Heart right ventricle (tissue), 16 donors: ENCODE measurements at regions of chr7 and their contacts with region 1.

Region 1: GRCh38 chr7:30062591-30062990 is 34.4 kb downstream of the PLEKHA8 start:
- DNase-seq: no peak
- ATAC-seq: peak in 5 of 8 donors; percentile 63 to 78 (median 73)
- H3K4me3 ChIP-seq: no peak overlapping the region
- H3K27ac ChIP-seq: no peak overlapping the region
- H3K4me1 ChIP-seq: peaks cover 0 to 1% (median 0%) of the 10 kb centered on the region in 9 donors
- H3K27me3 ChIP-seq: no peaks in the 10 kb centered on the region
- CTCF ChIP-seq: peak; percentile 28 to 70 (median 63)

Region 2: DNA sequence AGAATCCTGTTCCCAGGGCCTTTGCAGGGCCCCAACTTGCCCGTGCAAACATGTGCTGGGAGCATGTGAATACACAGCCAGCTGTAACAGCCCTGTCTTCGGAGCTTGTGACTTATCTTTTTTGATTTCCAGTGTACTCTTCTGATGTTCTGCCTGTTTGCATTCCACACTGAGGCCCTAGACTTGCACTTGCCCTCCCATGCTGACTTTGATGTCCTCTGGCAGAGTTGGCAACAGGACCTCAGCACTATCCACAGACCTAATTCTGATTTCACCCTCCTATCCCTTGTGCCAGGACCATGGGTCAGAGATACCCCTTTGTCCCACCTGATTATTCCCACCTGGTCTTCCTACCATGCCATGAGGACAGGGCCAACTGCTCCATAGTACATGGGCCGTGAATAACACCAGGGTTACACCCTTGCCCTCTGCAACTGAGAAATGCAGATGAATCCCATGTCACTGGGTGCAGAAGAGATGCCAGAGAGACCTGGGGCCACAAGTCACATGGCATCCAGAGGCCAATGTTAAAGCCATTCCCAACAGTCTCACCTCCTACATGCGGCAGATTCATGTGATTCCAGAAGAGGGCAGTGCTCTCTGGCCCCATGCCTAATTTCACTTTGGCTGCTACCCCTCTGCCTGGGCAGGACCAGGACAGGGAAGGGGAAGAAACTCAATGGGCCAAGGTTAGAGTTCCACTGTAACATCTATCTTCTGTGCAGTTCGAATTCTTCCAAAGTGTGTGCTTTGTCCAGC is 116.0 kb before region 1 on chr7:
- intact Hi-C with region 1: loop called in 4 of 10 experiments (anchors 10 kb)
- DNase-seq: peak in 1 of 2 donors; percentile 35
- ATAC-seq: peak; percentile 47 to 78 (median 66)
- H3K4me3 ChIP-seq: no peak overlapping the region
- H3K27ac ChIP-seq: peak overlapping the region in 1 of 10 donors; percentile 3
- H3K4me1 ChIP-seq: peaks cover 0 to 14% (median 0%) of the 10 kb centered on the region in 9 donors
- H3K27me3 ChIP-seq: no peaks in the 10 kb centered on the region
- CTCF ChIP-seq: peak in 7 of 9 donors; percentile 20 to 59 (median 47)